Activated CD4-positive, alpha-beta T cell treated with anti-CD3 and anti-CD28 coated beads for 36 hours (primary cell): ENCODE measurements at regions of chr2 and their contacts with region 1.

Region 1: GRCh38 chr2:126413079-126413478 is 242.9 kb upstream of the GYPC start:
- DNase-seq: no peak
- ATAC-seq: peak; percentile 98
- H3K4me3 Mint-ChIP-seq: peak overlapping the region; percentile 1
- H3K27ac Mint-ChIP-seq: no peak overlapping the region
- H3K4me1 Mint-ChIP-seq: peaks cover 17% of the 10 kb centered on the region
- H3K27me3 Mint-ChIP-seq: peaks cover 15% of the 10 kb centered on the region

Region 2: DNA sequence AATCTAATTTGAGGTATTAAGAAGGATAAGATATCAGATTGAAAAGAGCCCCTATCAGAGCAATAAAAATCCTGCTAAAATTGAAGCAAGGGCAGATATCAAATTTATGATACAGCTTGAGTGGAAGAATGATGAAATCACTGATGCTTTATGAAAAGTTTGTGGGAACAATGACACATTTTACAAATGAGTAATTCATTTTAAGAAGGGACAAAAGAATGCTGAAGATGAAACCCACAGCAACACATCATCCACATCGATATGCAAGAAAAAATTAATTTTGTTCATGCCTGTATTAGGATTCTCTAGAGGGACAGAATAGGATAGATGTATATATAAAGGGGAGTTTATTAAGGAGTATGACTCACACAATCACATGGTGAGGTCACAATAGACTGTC is 112.7 kb before region 1 on chr2:
- CTCF ChIA-PET with region 1: no interaction called
- POLR2A ChIA-PET with region 1: no interaction called
- intact Hi-C with region 1: loop called in 1 of 2 experiments (anchors 1 kb)
- DNase-seq: no peak
- ATAC-seq: peak; percentile 59
- H3K4me3 Mint-ChIP-seq: no peak overlapping the region
- H3K27ac Mint-ChIP-seq: peak overlapping the region; percentile 75
- H3K4me1 Mint-ChIP-seq: peaks cover 13% of the 10 kb centered on the region
- H3K27me3 Mint-ChIP-seq: peaks cover 3% of the 10 kb centered on the region

Region 3: GRCh38 chr2:126657636-126658318 is 244.7 kb after region 1 on chr2:
- CTCF ChIA-PET with region 1: no interaction called
- POLR2A ChIA-PET with region 1: no interaction called
- intact Hi-C with region 1: loop called in 1 of 2 experiments (anchors 5 kb)
- DNase-seq: peak; percentile 87
- ATAC-seq: peak; percentile 67
- H3K4me3 Mint-ChIP-seq: peak overlapping the region; percentile 97
- H3K27ac Mint-ChIP-seq: peak overlapping the region; percentile 99
- H3K4me1 Mint-ChIP-seq: peaks cover 59% of the 10 kb centered on the region
- H3K27me3 Mint-ChIP-seq: no peaks in the 10 kb centered on the region